Right cardiac atrium (tissue), 5 donors: ENCODE measurements at regions of chr2 and their contacts with region 1.

Region 1: GRCh38 chr2:44955593-44956392 is 14.3 kb downstream of the SIX3 start:
- DNase-seq: peak; percentile 70 to 88 (median 84)
- ATAC-seq: peak; percentile 79 to 86
- H3K4me3 ChIP-seq: no peak overlapping the region
- H3K27ac ChIP-seq: no peak overlapping the region
- H3K4me1 ChIP-seq: no peaks in the 10 kb centered on the region
- H3K27me3 ChIP-seq: no peaks in the 10 kb centered on the region

Region 2: DNA sequence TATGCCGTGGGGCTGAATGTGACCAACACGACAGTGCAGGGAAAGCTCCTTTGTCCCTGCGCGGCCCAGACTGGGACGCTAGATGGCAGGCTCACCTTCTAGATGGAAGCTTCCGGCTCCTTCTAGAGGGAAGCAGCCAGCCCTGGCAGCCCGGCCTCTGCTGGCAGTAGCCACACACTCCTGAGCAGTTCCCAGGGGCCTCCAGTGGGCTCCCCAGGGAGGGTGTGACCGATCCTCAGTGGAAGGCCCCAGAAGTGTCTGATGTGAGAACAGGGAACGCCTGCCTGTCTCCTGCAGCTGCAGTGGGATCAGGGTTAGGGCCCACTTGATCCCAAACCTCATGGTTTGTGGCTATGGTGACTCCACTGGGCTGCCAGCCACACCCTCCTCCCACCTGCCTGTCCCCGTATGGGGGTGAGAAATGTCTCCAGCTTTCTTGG is 911.5 kb before region 1 on chr2:
- intact Hi-C with region 1: loop called in 3 of 4 experiments (anchors 5 to 10 kb)
- DNase-seq: peak; percentile 83 to 92 (median 85)
- ATAC-seq: peak; percentile 91 to 97
- H3K4me3 ChIP-seq: no peak overlapping the region
- H3K27ac ChIP-seq: no peak overlapping the region
- H3K4me1 ChIP-seq: no peaks in the 10 kb centered on the region
- H3K27me3 ChIP-seq: no peaks in the 10 kb centered on the region

Region 3: DNA sequence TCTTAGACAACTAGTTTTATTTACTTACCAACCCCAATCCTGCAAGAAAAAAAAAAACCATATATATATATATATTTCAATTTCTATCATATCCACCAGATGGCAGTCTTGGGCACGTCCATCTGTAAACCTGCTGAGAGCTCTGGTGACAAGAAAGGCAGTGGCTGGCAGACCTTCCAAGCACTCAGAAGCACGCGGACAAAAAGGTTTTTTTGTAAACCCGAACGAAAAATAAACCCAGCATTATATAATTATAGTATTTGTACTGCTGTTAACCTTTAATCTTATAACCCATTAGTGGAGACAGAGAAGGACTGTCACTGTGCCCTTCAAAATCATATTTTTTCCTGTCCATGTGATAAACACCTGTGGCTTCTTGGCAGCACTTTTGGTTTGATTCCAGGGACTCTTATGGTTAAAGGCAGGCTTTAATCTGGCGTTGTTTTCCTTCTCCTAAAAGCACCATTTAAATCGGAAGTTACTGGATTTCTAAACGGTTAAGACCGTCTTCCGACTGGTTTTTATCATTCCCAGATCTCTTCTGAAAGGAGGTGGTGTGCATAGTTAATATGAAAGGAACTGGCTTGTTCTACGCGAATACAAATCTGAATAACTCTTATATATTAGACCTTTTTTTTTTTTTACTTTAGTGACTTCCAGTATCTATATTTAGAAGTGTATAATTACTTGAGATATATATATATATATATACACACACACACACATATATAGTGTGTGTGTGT is 711.5 kb before region 1 on chr2:
- intact Hi-C with region 1: loop called in 1 of 4 experiments (anchors 10 kb)
- DNase-seq: peak; percentile 52 to 78 (median 53)
- ATAC-seq: peak; percentile 73 to 78
- H3K4me3 ChIP-seq: peak overlapping the region; percentile 74
- H3K27ac ChIP-seq: no peak overlapping the region
- H3K4me1 ChIP-seq: no peaks in the 10 kb centered on the region
- H3K27me3 ChIP-seq: no peaks in the 10 kb centered on the region

Region 4: GRCh38 chr2:44392338-44392943 is 563.4 kb before region 1 on chr2:
- intact Hi-C with region 1: loop called in 2 of 4 experiments (anchors 10 kb)
- DNase-seq: peak in 2 of 3 donors; percentile 33 to 60
- ATAC-seq: no peak
- H3K4me3 ChIP-seq: no peak overlapping the region
- H3K27ac ChIP-seq: no peak overlapping the region
- H3K4me1 ChIP-seq: no peaks in the 10 kb centered on the region
- H3K27me3 ChIP-seq: no peaks in the 10 kb centered on the region

Region 5: DNA sequence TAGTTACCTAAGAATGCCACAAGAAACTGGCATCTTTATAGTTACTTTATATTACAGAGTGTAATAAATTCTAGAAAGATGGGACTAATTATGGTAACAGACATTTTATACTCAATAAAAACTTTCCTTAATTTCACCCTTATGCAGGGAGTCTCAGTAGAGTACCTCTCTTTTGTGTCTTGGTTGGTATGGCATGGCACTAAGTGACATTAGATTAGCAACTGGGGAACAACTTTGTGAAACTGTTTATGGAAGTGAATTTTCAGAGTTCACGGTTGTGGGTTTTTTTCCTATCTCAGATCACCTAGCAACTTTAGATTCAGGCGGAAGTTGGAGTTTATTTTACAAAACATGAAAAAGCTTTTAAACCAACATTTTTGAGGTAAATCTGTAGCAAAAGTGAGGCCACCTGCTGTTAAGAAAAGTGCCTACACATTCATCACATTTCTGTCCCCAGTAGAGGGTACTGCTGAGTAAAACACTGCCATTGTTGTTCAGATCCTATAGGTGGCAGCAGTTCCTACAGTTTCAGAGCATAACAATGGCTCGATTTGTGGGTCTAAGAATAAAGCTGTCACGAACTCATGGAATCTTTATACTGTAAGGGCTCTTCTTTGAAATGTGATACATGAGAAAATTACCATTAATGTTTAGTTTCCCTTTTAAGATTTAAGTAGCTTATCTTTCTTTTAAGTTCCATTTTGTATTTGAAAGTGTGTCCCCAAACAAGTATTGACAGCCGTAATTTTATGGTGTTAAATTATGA is 476.5 kb before region 1 on chr2:
- intact Hi-C with region 1: loop called in 2 of 4 experiments (anchors 5 kb)
- DNase-seq: no peak
- ATAC-seq: peak; percentile 89 to 91
- H3K4me3 ChIP-seq: no peak overlapping the region
- H3K27ac ChIP-seq: no peak overlapping the region
- H3K4me1 ChIP-seq: no peaks in the 10 kb centered on the region
- H3K27me3 ChIP-seq: no peaks in the 10 kb centered on the region